Activated naive CD4-positive, alpha-beta T cell treated with anti-CD3 and anti-CD28 coated beads for 36 hours (primary cell): ENCODE measurements at regions of chrX and their contacts with region 1.

Region 1: GRCh38 chrX:104922206-104922621 is 298.3 kb downstream of the TEX13A start:
- DNase-seq: peak; percentile 75
- H3K4me3 Mint-ChIP-seq: no peak overlapping the region
- H3K27ac Mint-ChIP-seq: no peak overlapping the region
- H3K4me1 Mint-ChIP-seq: no peaks in the 10 kb centered on the region
- H3K27me3 Mint-ChIP-seq: no peaks in the 10 kb centered on the region

Region 2: DNA sequence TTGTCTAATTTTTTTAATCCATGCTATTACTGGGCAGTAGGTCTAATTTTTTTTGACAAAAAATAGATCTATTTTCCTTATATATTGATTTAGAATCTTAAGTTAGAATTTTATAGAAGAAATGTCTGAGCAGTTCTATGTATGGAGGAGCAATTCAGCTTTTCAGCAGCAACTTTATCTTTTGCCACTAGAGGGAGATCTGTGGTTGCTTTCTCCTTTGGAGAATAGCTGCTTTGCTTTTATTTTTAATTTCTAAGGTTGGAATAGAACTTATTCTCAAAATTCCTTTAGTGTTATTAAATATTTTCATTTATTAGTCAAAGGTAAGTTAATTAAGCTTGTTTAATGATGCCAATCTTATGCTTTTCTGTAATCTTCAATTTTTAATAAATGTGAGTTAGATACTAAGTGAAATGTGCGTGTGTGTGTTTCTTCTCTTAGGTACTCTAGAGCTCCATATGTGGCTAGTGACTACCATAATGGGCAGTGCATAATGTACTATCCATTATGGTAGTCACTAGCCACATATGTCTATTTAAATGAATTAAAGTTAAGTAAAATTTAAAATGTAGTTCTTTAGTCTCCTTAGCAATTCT is 726.6 kb before region 1 on chrX:
- CTCF ChIA-PET with region 1: no interaction called
- intact Hi-C with region 1: loop called (anchors 10 kb)
- DNase-seq: peak; percentile 6
- H3K4me3 Mint-ChIP-seq: no peak overlapping the region
- H3K27ac Mint-ChIP-seq: no peak overlapping the region
- H3K4me1 Mint-ChIP-seq: peaks cover 2% of the 10 kb centered on the region
- H3K27me3 Mint-ChIP-seq: no peaks in the 10 kb centered on the region

Region 3: DNA sequence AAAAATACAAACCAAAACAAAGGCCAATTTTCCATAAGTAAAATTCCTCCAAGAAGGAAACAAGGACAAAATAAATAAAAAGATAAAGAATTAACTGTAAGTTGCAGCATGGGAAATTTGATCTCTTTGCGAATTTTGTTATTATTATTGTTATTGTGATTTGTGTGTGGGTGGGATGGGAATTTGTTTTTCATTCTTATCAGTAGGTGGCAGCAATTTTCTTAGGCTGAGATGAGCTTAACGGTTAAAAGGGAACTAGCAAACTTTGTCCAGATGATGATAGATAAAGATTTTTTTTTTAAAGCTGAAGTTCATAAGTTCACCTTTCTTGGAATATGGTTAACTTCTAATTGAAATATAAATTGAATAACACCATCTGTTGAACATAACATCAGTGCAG is 439.5 kb before region 1 on chrX:
- CTCF ChIA-PET with region 1: no interaction called
- intact Hi-C with region 1: loop called (anchors 10 kb)
- DNase-seq: no peak
- H3K4me3 Mint-ChIP-seq: no peak overlapping the region
- H3K27ac Mint-ChIP-seq: no peak overlapping the region
- H3K4me1 Mint-ChIP-seq: no peaks in the 10 kb centered on the region
- H3K27me3 Mint-ChIP-seq: peaks cover 2% of the 10 kb centered on the region

Region 4: GRCh38 chrX:104565791-104566680 is 356.2 kb before region 1 on chrX and contains the start of gene IL1RAPL2:
- CTCF ChIA-PET with region 1: interaction called, 4 read pairs
- intact Hi-C with region 1: loop called (anchors 1 kb)
- DNase-seq: peak; percentile 42
- H3K4me3 Mint-ChIP-seq: no peak within 1 kb of the TSS
- H3K27ac Mint-ChIP-seq: no peak within 1 kb of the TSS
- H3K4me1 Mint-ChIP-seq: no peaks in the 10 kb centered on the region
- H3K27me3 Mint-ChIP-seq: peaks cover 25% of the 10 kb centered on the region
- total RNA-seq, gene IL1RAPL2: not detected

Region 5: GRCh38 chrX:104668550-104668949 is 253.7 kb before region 1 on chrX:
- CTCF ChIA-PET with region 1: interaction called, 3 read pairs
- intact Hi-C with region 1: loop called (anchors 1 kb)
- DNase-seq: no peak
- H3K4me3 Mint-ChIP-seq: no peak overlapping the region
- H3K27ac Mint-ChIP-seq: no peak overlapping the region
- H3K4me1 Mint-ChIP-seq: no peaks in the 10 kb centered on the region
- H3K27me3 Mint-ChIP-seq: peaks cover 2% of the 10 kb centered on the region

Region 6: GRCh38 chrX:104789791-104790190 is 132.4 kb before region 1 on chrX:
- CTCF ChIA-PET with region 1: no interaction called
- intact Hi-C with region 1: loop called (anchors 10 kb)
- DNase-seq: no peak
- H3K4me3 Mint-ChIP-seq: no peak overlapping the region
- H3K27ac Mint-ChIP-seq: no peak overlapping the region
- H3K4me1 Mint-ChIP-seq: no peaks in the 10 kb centered on the region
- H3K27me3 Mint-ChIP-seq: no peaks in the 10 kb centered on the region